PC-3 (cell line): ENCODE measurements at regions of chr17 and their contacts with region 1.

Region 1: DNA sequence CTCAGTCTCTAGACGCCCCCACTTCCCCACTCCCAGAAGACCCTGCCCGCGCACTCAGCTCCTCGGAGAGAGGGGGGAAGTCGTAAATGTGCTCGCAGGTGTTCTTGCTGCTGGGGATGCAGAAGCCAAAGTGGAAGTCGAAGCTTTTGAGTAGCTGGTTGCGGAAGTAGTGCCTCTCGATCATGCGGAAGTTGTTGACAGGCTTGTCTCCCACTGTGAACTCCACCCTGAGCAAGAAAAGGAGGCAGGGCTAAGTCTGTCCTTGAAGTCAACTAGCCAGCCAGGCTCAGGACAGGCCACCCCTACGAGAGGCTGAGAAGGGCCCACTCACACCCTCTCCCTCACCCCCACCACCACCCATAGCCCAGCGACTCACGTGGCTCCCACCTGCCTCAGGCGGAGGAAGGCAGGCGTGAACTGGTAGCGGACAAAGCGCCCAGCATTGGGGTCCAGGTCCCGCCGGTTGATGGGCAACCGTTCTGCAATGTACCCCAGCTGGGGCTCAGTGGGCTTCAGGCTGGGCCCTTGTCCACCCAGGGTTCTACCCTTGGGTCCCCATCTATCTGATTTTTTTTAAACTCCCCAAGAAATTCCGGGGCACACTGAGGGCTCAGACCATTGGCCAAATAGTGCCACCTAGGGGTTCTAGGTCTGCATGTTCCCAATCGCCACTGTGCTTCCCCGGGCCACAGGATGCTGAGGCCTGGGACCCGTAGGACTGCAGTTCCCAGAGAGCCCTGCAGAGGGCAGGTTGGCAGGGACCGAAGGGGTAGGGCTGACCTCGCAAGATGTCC is 4.6 kb downstream of the UNC119 start:
- DNase-seq: peak; percentile 81
- ATAC-seq: peak; percentile 54
- H3K4me3 ChIP-seq: no peak overlapping the region
- H3K27ac ChIP-seq: no peak overlapping the region
- H3K4me1 ChIP-seq: 0 out of 2 replicates have a peak, but pooled peaks cover 8% of the 10 kb centered on the region
- H3K27me3 ChIP-seq: no peaks in the 10 kb centered on the region
- CTCF ChIP-seq: peak; percentile 87

Region 2: DNA sequence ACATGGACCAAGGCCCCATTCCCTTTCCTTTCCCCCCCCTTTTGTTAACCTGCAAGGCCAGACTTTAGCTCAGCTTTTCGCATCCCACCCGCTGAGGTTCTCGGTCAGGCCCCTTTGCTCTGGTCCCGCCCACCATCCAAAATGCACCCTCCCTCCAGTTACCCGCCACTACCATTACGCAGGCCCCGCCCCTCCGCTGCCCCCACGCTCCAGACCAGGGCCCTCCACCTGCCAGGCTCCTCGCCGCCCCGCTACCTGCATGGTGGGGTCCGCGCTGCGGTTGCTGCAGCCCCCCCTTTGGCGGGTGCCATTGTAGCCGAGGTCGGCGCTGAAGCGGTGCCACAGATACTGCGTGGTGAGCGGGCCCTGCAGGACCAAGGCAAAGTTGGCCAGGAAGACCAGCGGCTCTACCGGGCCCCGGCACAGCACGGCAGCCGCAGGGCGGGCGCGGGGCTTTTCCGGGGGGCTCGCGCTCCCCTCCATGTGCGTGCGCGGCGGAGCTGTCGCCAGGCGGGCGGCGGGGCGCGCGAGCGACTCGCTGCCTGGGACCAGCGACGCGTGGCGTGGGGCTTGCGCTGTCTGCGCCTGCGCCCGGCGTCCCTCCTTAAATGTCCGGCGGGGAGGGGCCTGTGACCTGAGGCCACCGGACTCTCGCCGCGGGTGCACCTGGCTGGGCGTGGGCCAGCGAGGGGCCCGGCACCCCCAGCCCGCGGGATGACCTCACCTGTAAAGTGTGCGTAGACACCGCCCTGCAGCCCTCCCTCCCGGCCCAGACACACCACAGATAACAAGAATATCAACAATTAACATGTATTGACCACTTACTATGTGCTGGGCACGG is 142.0 kb before region 1 on chr17 and contains the start of gene SLC46A1:
- CTCF ChIA-PET with region 1: no interaction called
- POLR2A ChIA-PET with region 1: no interaction called
- intact Hi-C with region 1: loop called (anchors 10 kb)
- DNase-seq: peak; percentile 38
- ATAC-seq: peak; percentile 82
- H3K4me3 ChIP-seq: peak within 1 kb of the TSS; percentile 88
- H3K27ac ChIP-seq: no peak within 1 kb of the TSS
- H3K4me1 ChIP-seq: peaks cover 20% of the 10 kb centered on the region
- H3K27me3 ChIP-seq: no peaks in the 10 kb centered on the region
- CTCF ChIP-seq: no peak
- total RNA-seq, gene SLC46A1: 10.4 and 12.9 TPM in 2 replicates

Region 3: DNA sequence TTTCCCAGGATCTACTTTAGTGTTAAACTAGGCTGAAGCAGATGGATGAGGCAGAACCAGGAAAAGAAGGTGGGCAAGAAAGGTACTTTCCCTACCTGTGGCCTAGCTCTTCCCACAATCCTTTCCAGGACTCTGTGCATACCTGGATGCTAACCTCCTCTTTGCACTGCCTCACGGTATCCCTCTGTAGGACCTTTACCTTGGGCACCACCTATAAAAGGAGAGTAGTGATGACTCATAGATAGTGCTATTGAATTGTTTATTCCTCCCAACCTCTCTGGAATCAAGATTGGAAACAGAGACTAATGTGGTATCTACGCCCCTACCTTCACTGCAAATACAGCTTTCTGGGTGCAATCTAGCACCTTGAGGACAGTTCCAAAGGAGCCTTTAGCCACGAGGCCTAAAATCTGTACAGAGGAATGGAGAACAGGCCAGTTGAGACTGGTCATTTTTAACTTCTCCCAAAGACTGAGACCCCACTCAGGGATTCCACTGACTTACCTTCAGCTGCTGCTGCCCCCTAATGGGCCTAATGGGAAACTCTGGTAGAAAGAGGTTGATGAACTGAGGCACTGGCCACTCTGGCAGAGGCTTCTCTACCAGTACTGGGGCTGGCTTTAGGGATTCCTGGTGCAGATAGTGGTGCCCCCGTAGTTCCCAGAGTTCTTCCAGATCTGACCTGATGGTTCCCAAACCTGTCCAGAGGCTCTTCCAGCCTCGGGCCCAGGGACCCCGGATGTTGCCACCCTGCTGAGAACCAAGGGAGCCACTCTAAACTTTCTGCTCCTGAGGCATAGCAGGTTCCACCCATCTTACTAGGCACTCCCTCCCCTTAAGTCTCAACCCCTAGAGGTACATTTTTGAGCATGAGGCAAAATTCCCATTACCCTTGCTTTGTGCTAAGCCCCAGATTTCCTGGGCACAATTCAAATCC is 65.4 kb after region 1 on chr17:
- CTCF ChIA-PET with region 1: no interaction called
- POLR2A ChIA-PET with region 1: no interaction called
- intact Hi-C with region 1: loop called (anchors 1 kb)
- DNase-seq: peak; percentile 24
- ATAC-seq: peak; percentile 51
- H3K4me3 ChIP-seq: no peak overlapping the region
- H3K27ac ChIP-seq: no peak overlapping the region
- H3K4me1 ChIP-seq: no peaks in the 10 kb centered on the region
- H3K27me3 ChIP-seq: no peaks in the 10 kb centered on the region
- CTCF ChIP-seq: peak; percentile 64

Region 4: DNA sequence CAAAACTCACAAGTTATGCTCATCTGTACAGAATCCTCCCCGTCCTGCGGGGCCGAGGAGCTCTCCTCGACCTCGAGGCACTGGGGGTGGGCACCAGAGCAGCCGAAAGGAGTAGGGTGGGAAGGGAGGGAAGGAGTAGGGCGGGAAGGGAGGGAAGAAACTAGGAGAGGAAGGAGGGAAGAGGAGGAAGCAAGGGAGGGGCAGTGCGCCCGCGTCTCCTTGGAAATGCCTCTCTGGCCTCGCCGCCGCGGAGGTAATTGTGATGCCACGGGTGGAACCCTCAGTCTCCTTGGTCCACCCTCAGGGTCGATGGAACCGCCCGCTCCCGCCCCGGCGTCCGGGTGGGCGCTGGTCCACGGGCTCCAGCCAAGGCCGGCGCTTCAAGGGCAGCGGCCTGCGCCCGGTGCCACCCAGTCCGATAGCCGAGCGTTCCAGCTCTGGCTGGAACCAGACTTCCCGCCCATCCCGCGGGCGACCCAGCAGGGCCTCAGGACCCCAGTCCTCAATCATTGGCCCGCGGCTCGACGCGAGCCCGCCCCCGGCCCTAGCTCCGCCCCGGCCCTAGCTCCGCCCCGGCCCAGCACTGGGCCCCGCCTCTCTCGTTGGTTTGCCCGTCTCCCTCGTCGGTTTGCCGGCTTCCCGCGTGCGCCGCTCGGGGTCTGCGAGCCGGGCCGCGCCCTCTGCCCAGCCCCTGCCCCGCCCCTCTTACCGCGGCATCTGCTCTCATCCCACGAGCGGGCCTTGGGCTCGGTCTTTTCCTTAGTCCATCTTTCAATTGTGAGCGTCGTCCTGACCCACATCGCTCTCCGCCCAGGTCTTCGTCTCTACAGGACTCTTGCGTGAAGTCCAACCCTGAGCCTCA is 163.3 kb after region 1 on chr17:
- CTCF ChIA-PET with region 1: no interaction called
- POLR2A ChIA-PET with region 1: no interaction called
- intact Hi-C with region 1: no loop called
- DNase-seq: peak; percentile 87
- ATAC-seq: peak; percentile 96
- H3K4me3 ChIP-seq: peak overlapping the region; percentile 74
- H3K27ac ChIP-seq: peak overlapping the region; percentile 70
- H3K4me1 ChIP-seq: peaks cover 4% of the 10 kb centered on the region; the same call in 1 of the 2 replicates
- H3K27me3 ChIP-seq: no peaks in the 10 kb centered on the region
- CTCF ChIP-seq: no peak